HEK293 (cell line): ENCODE measurements at regions of chr16 and their contacts with region 1.

Region 1: GRCh38 chr16:714558-715476 is at the start of gene METRN:
- H3K4me3 ChIP-seq: peak within 1 kb of the TSS; percentile 44
- H3K27ac ChIP-seq: peak within 1 kb of the TSS; percentile 66; the same call in 1 of the 2 replicates
- H3K4me1 ChIP-seq: peaks cover 9% of the 10 kb centered on the region
- CTCF ChIP-seq: no peak

Region 2: DNA sequence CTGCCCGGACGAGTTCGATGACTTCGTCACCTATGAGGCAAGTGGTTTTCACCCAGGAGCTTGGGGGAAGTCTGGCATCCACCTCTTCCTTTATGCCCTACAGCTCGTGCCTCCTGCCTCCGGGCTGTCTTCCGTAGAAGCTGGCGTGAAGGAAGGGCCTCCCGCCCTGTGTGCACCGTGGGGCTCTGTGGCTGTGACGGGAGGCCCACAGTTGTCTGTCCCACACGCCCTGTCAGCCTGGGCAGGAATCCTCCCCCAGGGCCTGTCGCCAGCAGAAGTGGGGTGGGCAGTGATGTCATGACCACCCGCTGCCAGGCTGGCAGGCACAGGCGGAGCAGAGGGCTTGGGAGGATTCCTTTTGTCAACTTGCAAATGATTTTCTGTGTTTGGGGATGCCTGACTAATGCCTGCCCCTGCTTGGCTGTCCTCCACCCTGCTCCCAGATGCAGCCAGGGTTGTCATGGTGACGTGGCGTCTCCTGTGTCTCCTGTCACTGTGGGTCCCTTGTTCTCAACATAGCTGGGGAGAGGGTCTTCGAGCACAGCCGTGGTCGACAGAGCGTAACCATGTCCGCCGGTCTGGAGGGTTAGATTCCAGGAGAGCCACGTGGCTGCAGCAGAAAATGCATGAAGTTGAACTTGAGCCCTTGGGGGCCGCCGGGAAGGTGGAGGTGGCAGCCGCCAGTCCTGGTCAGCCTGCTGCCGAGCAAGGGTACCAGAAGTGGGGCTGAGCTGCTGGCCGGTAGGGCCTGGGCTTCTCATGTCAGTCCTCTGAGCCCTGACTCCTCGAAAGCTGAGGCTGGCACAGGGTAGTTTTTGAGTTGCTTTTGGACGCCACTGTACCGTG is 243.2 kb before region 1 on chr16:
- CTCF ChIA-PET with region 1: no interaction called
- POLR2A ChIA-PET with region 1: no interaction called
- H3K4me3 ChIP-seq: no peak overlapping the region
- H3K27ac ChIP-seq: no peak overlapping the region
- H3K4me1 ChIP-seq: 0 out of 2 replicates have a peak, but pooled peaks cover 4% of the 10 kb centered on the region
- CTCF ChIP-seq: no peak

Region 3: DNA sequence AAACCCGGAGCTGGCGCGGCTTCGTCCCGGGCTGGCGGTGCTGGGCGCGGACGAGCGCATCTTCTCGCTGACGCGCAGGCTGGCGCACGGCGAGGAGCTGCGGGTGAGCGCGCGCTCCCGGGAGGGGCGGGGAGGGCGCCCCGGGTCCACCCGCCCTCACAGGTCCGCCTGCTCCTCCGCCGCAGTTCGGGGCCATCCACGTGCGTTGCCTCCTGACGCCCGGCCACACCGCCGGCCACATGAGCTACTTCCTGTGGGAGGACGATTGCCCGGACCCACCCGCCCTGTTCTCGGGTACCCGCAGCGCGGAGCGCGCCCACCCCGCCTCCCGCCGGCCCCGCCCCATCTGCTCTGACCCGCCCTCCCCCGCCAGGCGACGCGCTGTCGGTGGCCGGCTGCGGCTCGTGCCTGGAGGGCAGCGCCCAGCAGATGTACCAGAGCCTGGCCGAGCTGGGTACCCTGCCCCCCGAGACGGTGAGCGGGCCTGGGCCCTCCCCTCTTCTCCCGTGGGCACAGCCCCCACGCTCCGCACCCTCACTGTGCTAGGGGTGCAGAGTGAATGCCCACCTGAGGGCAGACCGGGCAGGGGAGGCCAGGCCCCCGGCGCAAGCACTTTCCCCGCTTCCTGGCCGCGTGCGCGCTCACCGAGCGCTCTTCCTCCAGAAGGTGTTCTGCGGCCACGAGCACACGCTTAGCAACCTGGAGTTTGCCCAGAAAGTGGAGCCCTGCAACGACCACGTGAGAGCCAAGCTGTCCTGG is 13.5 kb after region 1 on chr16:
- CTCF ChIA-PET with region 1: interaction called, 38 read pairs
- POLR2A ChIA-PET with region 1: interaction called, 12 read pairs
- H3K4me3 ChIP-seq: peak overlapping the region; percentile 15
- H3K27ac ChIP-seq: no peak overlapping the region
- H3K4me1 ChIP-seq: peaks cover 4% of the 10 kb centered on the region; the same call in 1 of the 2 replicates
- CTCF ChIP-seq: no peak

Region 4: GRCh38 chr16:733382-734207 is 18.8 kb after region 1 on chr16:
- CTCF ChIA-PET with region 1: interaction called, 11 read pairs
- POLR2A ChIA-PET with region 1: interaction called, 12 read pairs
- H3K4me3 ChIP-seq: no peak overlapping the region
- H3K27ac ChIP-seq: no peak overlapping the region
- H3K4me1 ChIP-seq: no peaks in the 10 kb centered on the region
- CTCF ChIP-seq: peak; percentile 50

Region 5: DNA sequence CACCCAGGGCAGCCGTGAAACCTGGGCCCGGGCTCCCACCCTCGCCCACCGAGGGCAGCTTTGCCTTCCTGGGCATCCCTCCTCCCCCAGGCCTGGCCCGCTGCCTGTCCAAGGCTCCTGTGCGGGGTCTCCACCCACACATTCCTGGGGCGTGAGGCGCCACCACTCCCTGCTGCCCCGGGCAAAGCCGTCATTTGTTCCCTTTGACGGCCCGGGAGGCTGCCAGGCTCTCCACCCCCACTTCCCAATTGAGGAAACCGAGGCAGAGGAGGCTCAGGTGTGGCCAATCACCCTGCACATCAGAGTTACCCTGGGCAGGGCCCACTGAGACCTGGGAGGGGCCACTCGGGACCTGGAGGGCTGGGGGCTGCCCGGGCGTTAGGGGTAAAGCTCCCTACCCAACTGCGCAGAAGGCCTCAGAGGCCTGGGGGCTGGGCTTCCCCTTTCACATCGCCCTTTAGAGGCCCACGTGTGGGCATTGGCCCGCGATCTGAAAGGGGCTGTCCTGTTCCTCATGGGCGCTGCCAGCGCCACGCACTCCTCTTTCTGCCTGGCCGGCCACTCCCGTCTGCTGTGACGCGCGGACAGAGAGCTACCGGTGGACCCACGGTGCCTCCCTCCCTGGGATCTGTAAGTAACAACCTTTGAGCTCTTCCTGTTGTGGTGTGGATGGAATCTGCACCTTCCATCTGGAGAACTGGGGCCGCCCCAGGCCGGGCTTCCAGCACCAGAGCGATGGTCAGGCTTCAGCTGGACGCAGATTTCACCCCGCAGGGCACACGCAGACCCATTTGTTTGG is 45.9 kb after region 1 on chr16 and contains the start of gene MSLN:
- CTCF ChIA-PET with region 1: no interaction called
- POLR2A ChIA-PET with region 1: no interaction called
- H3K4me3 ChIP-seq: no peak within 1 kb of the TSS
- H3K27ac ChIP-seq: no peak within 1 kb of the TSS
- H3K4me1 ChIP-seq: no peaks in the 10 kb centered on the region
- CTCF ChIP-seq: no peak